ENCODE measurements at regions of chr16 and their contacts with region 1.

Region 1: DNA sequence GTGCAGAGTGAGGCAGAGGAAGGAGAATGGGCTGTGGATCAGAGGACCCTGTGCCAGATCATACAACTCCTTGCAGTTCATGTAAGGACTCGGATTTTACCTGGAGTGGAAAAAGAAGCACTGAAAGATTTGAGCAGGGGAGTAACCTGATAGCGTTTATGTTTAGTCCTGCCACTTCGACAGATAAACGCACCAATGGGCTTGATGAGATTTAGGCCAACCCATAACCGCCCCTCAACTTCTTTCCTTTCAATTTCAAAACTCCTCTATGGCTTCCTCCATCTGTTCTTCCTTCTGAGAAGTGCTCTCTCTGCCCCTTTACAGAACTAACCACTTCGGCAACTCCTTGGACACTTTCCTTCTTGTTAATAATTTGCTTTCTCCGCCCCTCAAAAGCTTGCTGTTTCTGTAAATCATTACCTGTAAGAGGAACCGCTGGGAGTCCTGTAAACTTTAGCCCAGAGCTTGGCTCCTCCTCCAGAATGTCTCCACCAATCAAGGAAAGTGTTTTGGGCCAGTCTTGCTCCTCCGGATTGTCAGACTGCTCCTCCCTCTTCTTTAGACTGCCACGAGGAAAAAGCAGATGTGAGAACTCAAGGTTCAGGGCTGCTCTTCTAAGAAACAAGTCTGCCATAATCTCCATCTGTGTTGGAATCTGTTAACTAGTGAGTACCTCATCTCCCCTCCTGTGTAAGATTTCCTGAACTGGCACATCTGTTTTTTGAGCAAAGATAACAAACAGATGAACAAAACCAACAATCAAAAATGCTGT is at the start of gene ACSM3:
- DNase-seq: peak; percentile 89
- ATAC-seq: peak; percentile 99
- H3K4me3 ChIP-seq: peak within 1 kb of the TSS; percentile 43 to 78 (median 62)
- H3K4me3 Mint-ChIP-seq: peak within 1 kb of the TSS; percentile 86
- H3K27ac ChIP-seq: peak within 1 kb of the TSS; percentile 36 to 63
- H3K27ac Mint-ChIP-seq: peak within 1 kb of the TSS; percentile 80
- H3K4me1 ChIP-seq: peaks cover 10 to 15% of the 10 kb centered on the region in 2 donors
- H3K4me1 Mint-ChIP-seq: peaks cover 13% of the 10 kb centered on the region
- H3K27me3 ChIP-seq: no peaks in the 10 kb centered on the region
- H3K27me3 Mint-ChIP-seq: no peaks in the 10 kb centered on the region
- CTCF ChIP-seq: no peak
- total RNA-seq, gene ACSM3: 76.3 and 84.2 TPM in 2 replicates

Region 2: DNA sequence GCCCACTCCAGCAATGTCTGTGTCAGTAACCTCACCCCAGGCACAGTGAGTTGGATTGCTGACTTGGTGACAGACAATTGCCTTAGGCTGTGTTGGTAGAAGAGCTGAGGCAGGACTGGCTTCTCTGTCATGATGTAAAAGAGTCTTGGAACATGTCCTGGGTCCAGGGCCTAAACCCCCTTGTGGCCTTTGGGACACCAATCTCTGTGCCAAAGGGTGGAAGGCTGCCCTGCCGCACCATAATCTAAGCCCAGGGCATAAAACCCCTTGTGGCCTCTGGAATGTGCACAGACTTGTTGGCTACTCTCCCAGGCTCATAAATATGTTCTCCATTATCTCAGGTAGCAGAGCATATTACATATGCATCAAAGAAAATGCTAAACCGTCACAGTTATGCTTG is 100.8 kb before region 1 on chr16:
- CTCF ChIA-PET with region 1: no interaction called
- POLR2A ChIA-PET with region 1: no interaction called
- intact Hi-C with region 1: no loop called
- DNase-seq: no peak
- ATAC-seq: no peak
- H3K4me3 ChIP-seq: no peak overlapping the region
- H3K4me3 Mint-ChIP-seq: no peak overlapping the region
- H3K27ac ChIP-seq: no peak overlapping the region
- H3K27ac Mint-ChIP-seq: no peak overlapping the region
- H3K4me1 ChIP-seq: no peaks in the 10 kb centered on the region
- H3K4me1 Mint-ChIP-seq: no peaks in the 10 kb centered on the region
- H3K27me3 ChIP-seq: peaks cover 0 to 4% (median 0%) of the 10 kb centered on the region in 4 experiments
- H3K27me3 Mint-ChIP-seq: peaks cover 13% of the 10 kb centered on the region
- CTCF ChIP-seq: no peak

Region 3: DNA sequence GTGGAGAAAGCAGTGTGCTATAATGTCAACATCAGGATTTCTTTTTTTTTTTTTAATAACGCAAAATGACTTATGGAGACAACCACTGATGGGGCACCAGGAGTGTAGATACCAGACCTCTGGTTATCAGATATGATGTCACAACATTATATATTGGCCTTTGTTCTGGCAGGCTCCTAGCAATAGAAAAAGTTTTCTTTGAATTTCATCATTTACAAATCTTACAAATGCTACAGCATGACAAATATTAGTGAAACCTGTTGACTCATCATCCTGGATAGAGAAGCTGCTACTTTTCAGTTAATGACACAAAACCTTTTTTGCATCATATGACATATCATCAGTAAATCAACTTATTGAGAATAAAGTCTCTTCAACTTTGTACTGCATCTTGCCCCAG is 28.2 kb before region 1 on chr16:
- CTCF ChIA-PET with region 1: no interaction called
- POLR2A ChIA-PET with region 1: no interaction called
- intact Hi-C with region 1: no loop called
- DNase-seq: no peak
- ATAC-seq: no peak
- H3K4me3 ChIP-seq: no peak overlapping the region
- H3K4me3 Mint-ChIP-seq: no peak overlapping the region
- H3K27ac ChIP-seq: no peak overlapping the region
- H3K27ac Mint-ChIP-seq: no peak overlapping the region
- H3K4me1 ChIP-seq: peaks cover 12 to 14% of the 10 kb centered on the region in 2 donors
- H3K4me1 Mint-ChIP-seq: peaks cover 15% of the 10 kb centered on the region
- H3K27me3 ChIP-seq: no peaks in the 10 kb centered on the region
- H3K27me3 Mint-ChIP-seq: no peaks in the 10 kb centered on the region
- CTCF ChIP-seq: no peak

Region 4: GRCh38 chr16:20806168-20807050 is 42.8 kb after region 1 on chr16 and contains the starts of genes ERI2 and REXO5:
- CTCF ChIA-PET with region 1: no interaction called
- POLR2A ChIA-PET with region 1: no interaction called
- intact Hi-C with region 1: loop called (anchors 5 kb)
- DNase-seq: peak; percentile 79
- ATAC-seq: peak; percentile 86
- H3K4me3 ChIP-seq: peak within 1 kb of the TSS; percentile 78 to 85 (median 85)
- H3K4me3 Mint-ChIP-seq: peak within 1 kb of the TSS; percentile 91
- H3K27ac ChIP-seq: peak within 1 kb of the TSS; percentile 47 to 61
- H3K27ac Mint-ChIP-seq: peak within 1 kb of the TSS; percentile 75
- H3K4me1 ChIP-seq: peaks cover 5 to 19% of the 10 kb centered on the region in 2 donors
- H3K4me1 Mint-ChIP-seq: peaks cover 15% of the 10 kb centered on the region
- H3K27me3 ChIP-seq: no peaks in the 10 kb centered on the region
- H3K27me3 Mint-ChIP-seq: no peaks in the 10 kb centered on the region
- CTCF ChIP-seq: peak; percentile 37
- total RNA-seq, gene ERI2: 3.9 and 4.9 TPM in 2 replicates
- total RNA-seq, gene REXO5: 0.97 and 1.3 TPM in 2 replicates